ENCODE measurements at regions of chr17 and their contacts with region 1.

Region 1: GRCh38 chr17:78818932-78819331 is 21.7 kb downstream of the USP36 start:
- DNase-seq: peak; percentile 35 to 90 (median 64)
- ATAC-seq: peak; percentile 47
- H3K4me3 ChIP-seq: peak overlapping the region in 1 of 2 experiments; percentile 21
- H3K4me3 Mint-ChIP-seq: peak overlapping the region; percentile 58
- H3K27ac ChIP-seq: peak overlapping the region; percentile 61 to 78
- H3K27ac Mint-ChIP-seq: peak overlapping the region; percentile 90
- H3K4me1 ChIP-seq: peaks cover 43% of the 10 kb centered on the region
- H3K4me1 Mint-ChIP-seq: peaks cover 68% of the 10 kb centered on the region
- H3K27me3 ChIP-seq: no peaks in the 10 kb centered on the region
- H3K27me3 Mint-ChIP-seq: no peaks in the 10 kb centered on the region
- CTCF ChIP-seq: no peak

Region 2: GRCh38 chr17:78806451-78806850 is 12.5 kb before region 1 on chr17:
- CTCF ChIA-PET with region 1: interaction called, 18 read pairs
- POLR2A ChIA-PET with region 1: interaction called, 8 read pairs
- intact Hi-C with region 1: no loop called
- DNase-seq: peak in 6 of 9 experiments; percentile 39 to 85 (median 76)
- ATAC-seq: peak; percentile 69
- H3K4me3 ChIP-seq: no peak overlapping the region
- H3K4me3 Mint-ChIP-seq: peak overlapping the region; percentile 57
- H3K27ac ChIP-seq: peak overlapping the region in 1 of 2 experiments; percentile 30
- H3K27ac Mint-ChIP-seq: peak overlapping the region; percentile 85
- H3K4me1 ChIP-seq: peaks cover 34% of the 10 kb centered on the region
- H3K4me1 Mint-ChIP-seq: peaks cover 55% of the 10 kb centered on the region
- H3K27me3 ChIP-seq: no peaks in the 10 kb centered on the region
- H3K27me3 Mint-ChIP-seq: no peaks in the 10 kb centered on the region
- CTCF ChIP-seq: peak; percentile 58